Mammary epithelial cell (primary cell): ENCODE measurements at regions of chr17 and their contacts with region 1.

Region 1: GRCh38 chr17:50289991-50290702 is 15.9 kb downstream of the TMEM92 start:
- DNase-seq: peak; percentile 89
- H3K4me3 ChIP-seq: peak overlapping the region in 1 of 3 experiments; percentile 10
- H3K27ac ChIP-seq: peak overlapping the region; percentile 37
- H3K4me1 ChIP-seq: peaks cover 20% of the 10 kb centered on the region
- H3K27me3 ChIP-seq: no peaks in the 10 kb centered on the region
- CTCF ChIP-seq: no peak

Region 2: GRCh38 chr17:50177983-50178834 is 111.9 kb before region 1 on chr17:
- CTCF ChIA-PET with region 1: no interaction called
- dilution Hi-C with region 1: loop called (anchors 5 kb)
- in situ Hi-C with region 1: no loop called
- intact Hi-C with region 1: no loop called
- DNase-seq: peak; percentile 99
- H3K4me3 ChIP-seq: peak overlapping the region in 1 of 3 experiments; percentile 20
- H3K27ac ChIP-seq: peak overlapping the region; percentile 68
- H3K4me1 ChIP-seq: peaks cover 37% of the 10 kb centered on the region
- H3K27me3 ChIP-seq: no peaks in the 10 kb centered on the region
- CTCF ChIP-seq: peak; percentile 27 to 68

Region 3: GRCh38 chr17:50225693-50226240 is 64.4 kb before region 1 on chr17:
- CTCF ChIA-PET with region 1: no interaction called
- dilution Hi-C with region 1: loop called (anchors 5 kb)
- in situ Hi-C with region 1: no loop called
- intact Hi-C with region 1: no loop called
- DNase-seq: no peak
- H3K4me3 ChIP-seq: no peak overlapping the region
- H3K27ac ChIP-seq: no peak overlapping the region
- H3K4me1 ChIP-seq: peaks cover 24% of the 10 kb centered on the region
- H3K27me3 ChIP-seq: no peaks in the 10 kb centered on the region
- CTCF ChIP-seq: no peak

Region 4: GRCh38 chr17:50318501-50319285 is 28.5 kb after region 1 on chr17:
- CTCF ChIA-PET with region 1: no interaction called
- dilution Hi-C with region 1: no loop called
- in situ Hi-C with region 1: no loop called
- intact Hi-C with region 1: no loop called
- DNase-seq: peak; percentile 73
- H3K4me3 ChIP-seq: no peak overlapping the region
- H3K27ac ChIP-seq: no peak overlapping the region
- H3K4me1 ChIP-seq: peaks cover 33% of the 10 kb centered on the region
- H3K27me3 ChIP-seq: no peaks in the 10 kb centered on the region
- CTCF ChIP-seq: peak in 1 of 2 donors; percentile 57

Region 5: DNA sequence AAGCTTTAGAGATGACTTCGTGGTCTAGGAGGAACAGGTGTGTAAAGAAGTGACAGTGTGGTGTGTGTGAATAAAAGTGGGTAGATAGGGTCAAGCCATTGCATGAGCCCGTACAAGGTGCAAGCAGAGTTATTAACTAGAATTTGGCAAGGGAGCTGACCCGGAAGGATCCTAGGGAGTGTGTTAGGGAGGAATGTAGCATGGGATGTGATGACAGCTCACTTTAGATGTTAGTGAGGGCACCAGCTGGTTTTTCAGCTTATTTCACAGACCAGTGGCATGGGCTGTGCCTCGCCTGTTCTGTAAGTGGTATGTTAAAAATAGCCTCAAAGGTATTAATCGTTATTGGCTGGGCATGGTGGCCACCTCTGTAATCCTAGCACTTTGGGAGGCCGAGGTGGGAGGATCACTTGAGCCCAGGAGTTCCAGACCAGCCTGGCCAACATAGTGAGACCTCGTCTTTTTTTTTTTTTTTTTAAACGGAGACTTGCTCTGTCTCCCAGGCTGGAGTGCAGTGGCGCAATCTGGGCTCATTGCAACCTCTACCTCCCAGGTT is 468.9 kb after region 1 on chr17:
- CTCF ChIA-PET with region 1: no interaction called
- dilution Hi-C with region 1: no loop called
- in situ Hi-C with region 1: no loop called
- intact Hi-C with region 1: no loop called
- DNase-seq: no peak
- H3K4me3 ChIP-seq: no peak overlapping the region
- H3K27ac ChIP-seq: no peak overlapping the region
- H3K4me1 ChIP-seq: peaks cover 16% of the 10 kb centered on the region
- H3K27me3 ChIP-seq: no peaks in the 10 kb centered on the region
- CTCF ChIP-seq: no peak